ENCODE measurements at regions of chr2 and their contacts with region 1.

Region 1: GRCh38 chr2:70070541-70071268 is 16.6 kb upstream of the PCBP1 start:
- DNase-seq: peak in 1 of 2 donors; percentile 71
- ATAC-seq: peak; percentile 95
- H3K4me3 ChIP-seq: no peak overlapping the region
- H3K27ac ChIP-seq: peak overlapping the region; percentile 7 to 68
- H3K4me1 ChIP-seq: no peaks in the 10 kb centered on the region
- H3K27me3 ChIP-seq: no peaks in the 10 kb centered on the region

Region 2: GRCh38 chr2:69734035-69734631 is 336.6 kb before region 1 on chr2:
- intact Hi-C with region 1: loop called in 1 of 2 experiments (anchors 10 kb)
- DNase-seq: no peak
- ATAC-seq: peak; percentile 48
- H3K4me3 ChIP-seq: no peak overlapping the region
- H3K27ac ChIP-seq: no peak overlapping the region
- H3K4me1 ChIP-seq: no peaks in the 10 kb centered on the region
- H3K27me3 ChIP-seq: no peaks in the 10 kb centered on the region

Region 3: DNA sequence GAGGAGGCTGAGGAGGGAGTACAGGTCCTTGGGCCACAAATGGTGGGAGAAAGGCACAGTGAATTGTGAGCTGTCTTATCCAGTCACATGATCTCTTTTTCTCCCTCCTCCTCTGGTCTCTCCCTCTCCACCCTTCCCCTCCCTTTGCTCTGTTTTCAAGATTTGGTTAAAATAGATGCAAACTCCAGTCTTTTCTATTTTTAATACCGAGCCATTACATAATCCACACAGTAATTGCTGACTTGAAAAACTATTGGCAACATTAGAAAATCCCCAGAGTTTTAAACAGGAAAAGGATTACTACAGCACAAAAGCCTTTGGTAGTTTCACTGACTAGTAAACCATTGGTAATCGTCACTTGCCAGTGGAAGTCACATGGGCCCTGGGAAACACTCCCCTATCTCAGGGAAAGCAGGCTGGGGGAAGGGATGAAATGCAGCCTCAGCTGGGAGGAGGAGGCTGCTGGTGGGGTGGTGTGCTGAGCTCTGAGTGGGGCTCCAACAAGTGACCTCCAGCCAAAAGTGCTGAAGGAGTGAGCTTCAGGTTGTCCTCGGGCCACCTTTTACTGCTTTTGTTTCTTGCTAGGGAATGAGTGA is 40.8 kb before region 1 on chr2:
- intact Hi-C with region 1: loop called in 1 of 2 experiments (anchors 5 kb)
- DNase-seq: peak; percentile 79 to 90
- ATAC-seq: peak; percentile 92
- H3K4me3 ChIP-seq: no peak overlapping the region
- H3K27ac ChIP-seq: peak overlapping the region; percentile 73 to 80
- H3K4me1 ChIP-seq: peaks cover 3 to 4% of the 10 kb centered on the region in 2 donors
- H3K27me3 ChIP-seq: no peaks in the 10 kb centered on the region

Measured in aorta (tissue), 5 donors.